GM12878 (cell line): ENCODE measurements at regions of chr9 and their contacts with region 1.

Region 1: DNA sequence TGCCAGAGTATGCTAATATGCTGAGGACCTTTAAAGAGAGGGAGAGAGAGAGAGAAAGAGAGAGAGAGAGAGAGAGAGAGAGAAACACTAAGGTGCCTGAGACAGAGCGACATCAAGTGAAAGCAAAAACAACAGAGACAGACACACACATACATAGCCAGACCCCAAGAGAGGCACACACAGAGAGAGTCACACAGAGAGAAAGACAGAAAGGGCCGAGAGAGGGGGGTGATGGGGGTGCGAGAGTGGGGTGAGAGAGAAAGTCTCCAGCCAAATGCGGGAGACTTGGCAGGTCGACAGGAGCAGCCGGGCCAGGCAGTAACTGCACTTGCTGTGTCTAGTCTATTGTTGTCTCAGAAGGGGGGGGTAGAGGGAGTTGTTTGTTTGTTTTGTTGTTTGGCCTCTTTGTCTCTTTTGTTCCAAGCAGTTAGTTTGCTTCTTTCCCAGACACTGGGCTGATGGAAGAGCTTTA is 30.1 kb upstream of the NFIB start:
- DNase-seq: no peak
- ATAC-seq: no peak
- H3K4me3 ChIP-seq: no peak overlapping the region
- H3K27ac ChIP-seq: no peak overlapping the region
- H3K4me1 ChIP-seq: no peaks in the 10 kb centered on the region
- H3K27me3 ChIP-seq: peaks cover 7 to 33% of the 10 kb centered on the region in 2 experiments
- CTCF ChIP-seq: no peak
- EP300 ChIP-seq: no peak
- POLR2A ChIP-seq: no peak
- RAD21 ChIP-seq: no peak

Region 2: DNA sequence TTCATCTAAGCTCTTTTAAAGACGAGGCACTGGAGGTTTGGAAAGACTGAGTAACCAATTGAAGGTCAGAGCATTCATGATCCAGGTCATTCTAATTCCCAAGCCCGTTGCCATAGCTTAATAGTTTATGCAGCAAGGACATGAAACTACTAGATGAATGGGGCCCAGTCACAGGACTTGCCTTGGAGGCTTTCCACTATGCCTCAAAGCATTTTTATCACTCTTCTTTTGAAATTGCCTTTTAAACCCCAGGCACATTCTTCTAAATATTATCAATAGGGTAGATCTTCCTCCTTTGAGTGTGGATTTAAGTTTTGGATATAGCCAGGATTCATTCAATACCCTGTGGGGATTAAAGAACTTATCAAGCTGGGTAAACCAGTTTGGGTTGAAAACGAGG is 12.9 kb before region 1 on chr9:
- CTCF ChIA-PET with region 1: no interaction called
- POLR2A ChIA-PET with region 1: no interaction called
- RAD21 ChIA-PET with region 1: no interaction called
- SMC1A ChIA-PET with region 1: no interaction called
- in situ Hi-C with region 1: no loop called
- intact Hi-C with region 1: loop called (anchors 2 kb)
- DNase-seq: no peak
- ATAC-seq: no peak
- H3K4me3 ChIP-seq: no peak overlapping the region
- H3K27ac ChIP-seq: no peak overlapping the region
- H3K4me1 ChIP-seq: no peaks in the 10 kb centered on the region
- H3K27me3 ChIP-seq: peaks cover 0 to 1% of the 10 kb centered on the region in 2 experiments; a peak in 1 of 4 replicates
- CTCF ChIP-seq: no peak
- EP300 ChIP-seq: no peak
- POLR2A ChIP-seq: no peak
- RAD21 ChIP-seq: no peak

Region 3: DNA sequence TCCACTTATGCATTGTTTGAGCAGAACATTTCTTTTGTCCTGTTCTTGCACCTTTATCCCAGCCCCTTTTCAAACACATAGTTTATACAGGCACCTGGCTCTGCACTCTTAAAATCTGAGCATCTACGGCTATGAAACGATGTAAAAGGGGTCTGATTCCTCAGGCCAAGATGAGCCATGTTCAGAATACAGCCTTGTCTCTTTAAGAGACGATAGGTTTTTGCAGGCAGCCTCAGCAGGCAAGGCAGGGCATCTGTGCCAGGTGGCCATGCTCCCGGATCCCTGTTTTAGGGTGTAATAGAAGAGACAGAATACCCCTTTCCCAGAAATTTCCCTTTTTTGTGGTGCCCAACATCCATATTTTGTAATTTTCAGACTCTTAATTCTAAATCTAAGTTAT is 59.0 kb after region 1 on chr9:
- CTCF ChIA-PET with region 1: no interaction called
- POLR2A ChIA-PET with region 1: no interaction called
- RAD21 ChIA-PET with region 1: no interaction called
- SMC1A ChIA-PET with region 1: no interaction called
- in situ Hi-C with region 1: no loop called
- intact Hi-C with region 1: no loop called
- DNase-seq: no peak
- ATAC-seq: no peak
- H3K4me3 ChIP-seq: no peak overlapping the region
- H3K27ac ChIP-seq: no peak overlapping the region
- H3K4me1 ChIP-seq: no peaks in the 10 kb centered on the region
- H3K27me3 ChIP-seq: no peaks in the 10 kb centered on the region
- CTCF ChIP-seq: no peak
- EP300 ChIP-seq: no peak
- POLR2A ChIP-seq: no peak
- RAD21 ChIP-seq: no peak